Thyroid gland (tissue), 4 donors: ENCODE measurements at regions of chr11 and their contacts with region 1.

Region 1: DNA sequence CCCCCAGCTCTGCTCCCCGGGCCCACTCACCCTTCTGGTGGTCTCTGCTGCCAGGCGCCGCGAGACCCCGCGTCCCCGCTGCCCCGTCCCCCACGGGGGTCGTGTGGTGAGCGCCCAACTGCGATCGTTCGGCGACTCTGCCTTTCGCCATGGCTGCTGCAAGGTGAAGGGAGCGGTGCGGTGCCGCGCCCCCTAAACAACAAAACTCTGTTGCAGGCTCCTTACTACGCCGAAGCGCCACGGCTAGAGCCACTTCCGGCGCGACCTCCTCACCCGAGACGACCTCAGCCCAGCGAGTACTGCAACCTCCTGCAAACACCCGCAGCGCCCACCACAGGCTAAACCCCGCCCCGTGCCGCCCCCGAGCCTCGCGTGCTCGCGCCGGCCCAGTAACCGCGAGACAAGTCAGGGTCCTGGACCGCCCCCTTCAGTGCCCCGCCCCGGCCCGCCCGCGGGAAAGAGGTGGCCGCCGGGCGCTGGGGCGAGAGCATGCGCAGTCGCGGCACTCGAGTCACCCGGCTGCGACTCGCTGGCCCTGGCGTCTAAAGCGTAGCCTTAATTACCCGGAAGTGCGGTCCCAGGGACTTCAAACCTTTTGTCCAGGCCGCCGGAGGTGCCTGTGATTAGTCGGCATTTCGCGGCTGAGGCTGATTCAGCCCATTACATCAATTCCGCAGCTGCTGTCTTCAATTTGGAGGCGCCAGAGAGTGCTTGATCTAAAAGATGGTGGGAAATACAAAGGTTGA is at the start of gene TMEM41B:
- DNase-seq: peak; percentile 99
- H3K4me3 ChIP-seq: peak within 1 kb of the TSS; percentile 93 to 100 (median 100)
- H3K27ac ChIP-seq: peak within 1 kb of the TSS; percentile 73 to 80 (median 80)
- H3K4me1 ChIP-seq: peaks cover 17 to 26% of the 10 kb centered on the region in 2 donors
- H3K27me3 ChIP-seq: no peaks in the 10 kb centered on the region
- CTCF ChIP-seq: no peak
- POLR2A ChIP-seq: peak; percentile 63 to 94
- total RNA-seq, gene TMEM41B: 52.7 to 86.7 (median 76.1) TPM

Region 2: GRCh38 chr11:9265211-9266131 is 49.0 kb before region 1 on chr11 and contains the start of gene DENND5A:
- intact Hi-C with region 1: loop called (anchors 10 kb)
- DNase-seq: peak; percentile 80 to 82
- H3K4me3 ChIP-seq: peak within 1 kb of the TSS; percentile 91 to 95 (median 95)
- H3K27ac ChIP-seq: peak within 1 kb of the TSS; percentile 80 to 97 (median 91)
- H3K4me1 ChIP-seq: peaks cover 4 to 18% of the 10 kb centered on the region in 2 donors
- H3K27me3 ChIP-seq: no peaks in the 10 kb centered on the region
- CTCF ChIP-seq: no peak
- POLR2A ChIP-seq: peak; percentile 72 to 91
- total RNA-seq, gene DENND5A: 45.6 to 80.8 (median 59.3) TPM

Region 3: GRCh38 chr11:9363954-9364912 is 49.8 kb after region 1 on chr11:
- intact Hi-C with region 1: loop called (anchors 5 kb)
- DNase-seq: peak; percentile 96
- H3K4me3 ChIP-seq: peak overlapping the region in 1 of 3 donors; percentile 39
- H3K27ac ChIP-seq: peak overlapping the region; percentile 98 to 99 (median 99)
- H3K4me1 ChIP-seq: peaks cover 11 to 16% of the 10 kb centered on the region in 2 donors
- H3K27me3 ChIP-seq: no peaks in the 10 kb centered on the region
- CTCF ChIP-seq: peak in 1 of 6 experiments; percentile 6
- POLR2A ChIP-seq: peak in 1 of 2 donors; percentile 91